Thyroid gland (tissue), 4 donors: ENCODE measurements at regions of chr17 and their contacts with region 1.

Region 1: GRCh38 chr17:7363311-7363710 is 8.4 kb downstream of the TMEM95 start:
- DNase-seq: no peak
- H3K4me3 ChIP-seq: no peak overlapping the region
- H3K27ac ChIP-seq: no peak overlapping the region
- H3K4me1 ChIP-seq: no peaks in the 10 kb centered on the region
- H3K27me3 ChIP-seq: no peaks in the 10 kb centered on the region
- CTCF ChIP-seq: no peak
- POLR2A ChIP-seq: no peak

Region 2: GRCh38 chr17:7314719-7315569 is 48.4 kb before region 1 on chr17 and contains the start of gene GPS2:
- intact Hi-C with region 1: no loop called
- DNase-seq: peak; percentile 92 to 94
- H3K4me3 ChIP-seq: peak within 1 kb of the TSS; percentile 51 to 95 (median 68)
- H3K27ac ChIP-seq: peak within 1 kb of the TSS; percentile 83 to 96 (median 83)
- H3K4me1 ChIP-seq: peaks cover 15 to 28% of the 10 kb centered on the region in 2 donors
- H3K27me3 ChIP-seq: no peaks in the 10 kb centered on the region
- CTCF ChIP-seq: peak in 1 of 6 experiments; percentile 6
- POLR2A ChIP-seq: peak in 1 of 2 donors; percentile 87
- total RNA-seq, gene GPS2: 69.5 to 130 (median 100) TPM

Region 3: GRCh38 chr17:7419819-7420610 is 56.7 kb after region 1 on chr17 and contains the start of gene SPEM1:
- intact Hi-C with region 1: loop called (anchors 5 kb)
- DNase-seq: no peak
- H3K4me3 ChIP-seq: no peak within 1 kb of the TSS
- H3K27ac ChIP-seq: no peak within 1 kb of the TSS
- H3K4me1 ChIP-seq: no peaks in the 10 kb centered on the region
- H3K27me3 ChIP-seq: no peaks in the 10 kb centered on the region
- CTCF ChIP-seq: no peak
- POLR2A ChIP-seq: no peak
- total RNA-seq, gene SPEM1: not detected